CD4-positive, alpha-beta memory T cell (primary cell): ENCODE measurements at regions of chr19 and their contacts with region 1.

Region 1: GRCh38 chr19:39970675-39971379 is at the start of gene PSMC4:
- DNase-seq: peak; percentile 98 to 99 (median 98)
- H3K4me3 ChIP-seq: peak within 1 kb of the TSS; percentile 63 to 98
- H3K4me3 Mint-ChIP-seq: peak within 1 kb of the TSS; percentile 94 to 100 (median 96)
- H3K27ac ChIP-seq: peak within 1 kb of the TSS; percentile 94
- H3K27ac Mint-ChIP-seq: peak within 1 kb of the TSS; percentile 91 to 100 (median 99)
- H3K4me1 ChIP-seq: peaks cover 43% of the 10 kb centered on the region
- H3K4me1 Mint-ChIP-seq: peaks cover 41 to 59% (median 50%) of the 10 kb centered on the region in 4 donors
- H3K27me3 ChIP-seq: no peaks in the 10 kb centered on the region
- H3K27me3 Mint-ChIP-seq: no peaks in the 10 kb centered on the region
- total RNA-seq, gene PSMC4: 53.1 to 56.3 TPM

Region 2: GRCh38 chr19:39824143-39825092 is 146.4 kb before region 1 on chr19:
- CTCF ChIA-PET with region 1: interaction called, 6 read pairs
- POLR2A ChIA-PET with region 1: interaction called, 3 read pairs
- intact Hi-C with region 1: loop called (anchors 2 kb)
- DNase-seq: peak; percentile 86 to 95 (median 88)
- H3K4me3 ChIP-seq: peak overlapping the region; percentile 67 to 85
- H3K4me3 Mint-ChIP-seq: no peak overlapping the region
- H3K27ac ChIP-seq: peak overlapping the region; percentile 60
- H3K27ac Mint-ChIP-seq: no peak overlapping the region
- H3K4me1 ChIP-seq: peaks cover 24% of the 10 kb centered on the region
- H3K4me1 Mint-ChIP-seq: peaks cover 7 to 16% (median 8%) of the 10 kb centered on the region in 4 donors
- H3K27me3 ChIP-seq: no peaks in the 10 kb centered on the region
- H3K27me3 Mint-ChIP-seq: no peaks in the 10 kb centered on the region

Region 3: DNA sequence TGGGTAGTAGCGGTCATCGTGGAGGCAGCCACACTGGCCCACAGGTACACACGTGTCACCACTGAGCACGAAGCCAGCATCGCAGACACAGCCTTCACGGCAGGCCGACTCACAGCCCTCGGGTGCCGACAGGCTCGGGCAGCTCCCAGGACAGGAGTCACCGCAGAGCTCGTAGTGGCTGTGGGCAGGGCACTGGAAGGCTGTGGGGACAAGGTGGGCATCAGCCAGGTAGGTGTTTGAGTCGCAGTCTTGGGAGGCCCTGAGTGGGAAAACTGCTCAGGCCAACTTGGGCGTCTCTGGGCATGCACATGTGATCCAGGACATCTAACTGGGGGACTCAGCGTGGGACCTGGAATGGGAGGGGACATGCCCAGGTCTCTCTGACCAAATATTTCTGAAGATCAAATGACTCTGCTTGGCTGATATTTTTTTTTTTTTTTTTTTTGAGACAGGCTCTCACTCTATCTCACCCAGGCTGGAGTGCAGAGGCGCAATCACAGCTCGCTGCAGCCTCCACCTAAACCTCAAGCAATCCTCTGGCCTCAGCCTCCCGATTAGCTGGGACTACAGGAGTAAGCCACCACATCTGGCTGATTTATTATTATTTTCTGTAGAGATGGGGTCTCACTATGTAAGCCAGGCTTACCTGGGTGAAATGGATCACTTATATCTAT is 80.8 kb before region 1 on chr19:
- CTCF ChIA-PET with region 1: interaction called, 20 read pairs
- POLR2A ChIA-PET with region 1: interaction called, 8 read pairs
- intact Hi-C with region 1: no loop called
- DNase-seq: no peak
- H3K4me3 ChIP-seq: no peak overlapping the region
- H3K4me3 Mint-ChIP-seq: no peak overlapping the region
- H3K27ac ChIP-seq: no peak overlapping the region
- H3K27ac Mint-ChIP-seq: peak overlapping the region in 2 of 7 donors; percentile 3 to 52
- H3K4me1 ChIP-seq: no peaks in the 10 kb centered on the region
- H3K4me1 Mint-ChIP-seq: no peaks in the 10 kb centered on the region
- H3K27me3 ChIP-seq: no peaks in the 10 kb centered on the region
- H3K27me3 Mint-ChIP-seq: no peaks in the 10 kb centered on the region

Region 4: DNA sequence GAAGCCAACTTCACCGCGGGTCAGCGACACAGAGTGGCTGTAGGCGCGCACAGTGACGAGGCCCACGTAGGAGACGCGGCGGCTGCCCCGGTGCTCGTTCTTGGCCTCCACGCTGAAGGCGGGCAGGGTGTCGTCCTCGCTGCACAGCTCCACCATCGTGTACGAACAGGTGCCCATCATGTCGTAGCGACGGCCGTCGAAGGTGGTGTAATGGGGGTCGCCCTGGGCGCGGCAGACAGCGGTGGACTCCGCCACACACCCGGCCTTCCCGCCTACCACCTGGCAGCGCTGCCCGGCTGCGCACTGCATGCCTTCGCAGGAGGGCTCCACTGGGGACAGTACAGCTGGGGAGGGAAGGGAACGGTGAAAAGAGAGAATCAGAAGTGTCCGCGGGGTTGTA is 46.4 kb before region 1 on chr19:
- CTCF ChIA-PET with region 1: interaction called, 58 read pairs
- POLR2A ChIA-PET with region 1: interaction called, 13 read pairs
- intact Hi-C with region 1: no loop called
- DNase-seq: no peak
- H3K4me3 ChIP-seq: no peak overlapping the region
- H3K4me3 Mint-ChIP-seq: no peak overlapping the region
- H3K27ac ChIP-seq: no peak overlapping the region
- H3K27ac Mint-ChIP-seq: no peak overlapping the region
- H3K4me1 ChIP-seq: no peaks in the 10 kb centered on the region
- H3K4me1 Mint-ChIP-seq: peaks cover 0 to 16% (median 6%) of the 10 kb centered on the region in 4 donors
- H3K27me3 ChIP-seq: no peaks in the 10 kb centered on the region
- H3K27me3 Mint-ChIP-seq: no peaks in the 10 kb centered on the region

Region 5: GRCh38 chr19:39996811-39997594 is 26.2 kb after region 1 on chr19 and contains the start of gene ZNF546:
- CTCF ChIA-PET with region 1: interaction called, 30 read pairs
- POLR2A ChIA-PET with region 1: interaction called, 46 read pairs
- intact Hi-C with region 1: loop called (anchors 1 kb)
- DNase-seq: peak; percentile 87 to 93 (median 90)
- H3K4me3 ChIP-seq: peak within 1 kb of the TSS; percentile 98 to 99
- H3K4me3 Mint-ChIP-seq: peak within 1 kb of the TSS; percentile 93 to 100 (median 99)
- H3K27ac ChIP-seq: peak within 1 kb of the TSS; percentile 82
- H3K27ac Mint-ChIP-seq: peak within 1 kb of the TSS; percentile 79 to 98 (median 96)
- H3K4me1 ChIP-seq: peaks cover 19% of the 10 kb centered on the region
- H3K4me1 Mint-ChIP-seq: peaks cover 27 to 53% (median 37%) of the 10 kb centered on the region in 4 donors
- H3K27me3 ChIP-seq: no peaks in the 10 kb centered on the region
- H3K27me3 Mint-ChIP-seq: no peaks in the 10 kb centered on the region
- total RNA-seq, gene ZNF546: 17.5 to 18.4 TPM

Region 6: GRCh38 chr19:40190891-40191835 is 220.3 kb after region 1 on chr19 and contains the start of gene MAP3K10:
- CTCF ChIA-PET with region 1: interaction called, 3 read pairs
- POLR2A ChIA-PET with region 1: no interaction called
- intact Hi-C with region 1: loop called (anchors 1 kb)
- DNase-seq: peak; percentile 67 to 77 (median 70)
- H3K4me3 ChIP-seq: peak within 1 kb of the TSS; percentile 66 to 95
- H3K4me3 Mint-ChIP-seq: peak within 1 kb of the TSS; percentile 87 to 94 (median 91)
- H3K27ac ChIP-seq: peak within 1 kb of the TSS; percentile 96
- H3K27ac Mint-ChIP-seq: peak within 1 kb of the TSS; percentile 92 to 98 (median 96)
- H3K4me1 ChIP-seq: peaks cover 19% of the 10 kb centered on the region
- H3K4me1 Mint-ChIP-seq: peaks cover 22 to 40% (median 29%) of the 10 kb centered on the region in 4 donors
- H3K27me3 ChIP-seq: no peaks in the 10 kb centered on the region
- H3K27me3 Mint-ChIP-seq: no peaks in the 10 kb centered on the region
- total RNA-seq, gene MAP3K10: 28.4 to 30.2 TPM